ENCODE measurements at regions of chr4 and their contacts with region 1.

Region 1: DNA sequence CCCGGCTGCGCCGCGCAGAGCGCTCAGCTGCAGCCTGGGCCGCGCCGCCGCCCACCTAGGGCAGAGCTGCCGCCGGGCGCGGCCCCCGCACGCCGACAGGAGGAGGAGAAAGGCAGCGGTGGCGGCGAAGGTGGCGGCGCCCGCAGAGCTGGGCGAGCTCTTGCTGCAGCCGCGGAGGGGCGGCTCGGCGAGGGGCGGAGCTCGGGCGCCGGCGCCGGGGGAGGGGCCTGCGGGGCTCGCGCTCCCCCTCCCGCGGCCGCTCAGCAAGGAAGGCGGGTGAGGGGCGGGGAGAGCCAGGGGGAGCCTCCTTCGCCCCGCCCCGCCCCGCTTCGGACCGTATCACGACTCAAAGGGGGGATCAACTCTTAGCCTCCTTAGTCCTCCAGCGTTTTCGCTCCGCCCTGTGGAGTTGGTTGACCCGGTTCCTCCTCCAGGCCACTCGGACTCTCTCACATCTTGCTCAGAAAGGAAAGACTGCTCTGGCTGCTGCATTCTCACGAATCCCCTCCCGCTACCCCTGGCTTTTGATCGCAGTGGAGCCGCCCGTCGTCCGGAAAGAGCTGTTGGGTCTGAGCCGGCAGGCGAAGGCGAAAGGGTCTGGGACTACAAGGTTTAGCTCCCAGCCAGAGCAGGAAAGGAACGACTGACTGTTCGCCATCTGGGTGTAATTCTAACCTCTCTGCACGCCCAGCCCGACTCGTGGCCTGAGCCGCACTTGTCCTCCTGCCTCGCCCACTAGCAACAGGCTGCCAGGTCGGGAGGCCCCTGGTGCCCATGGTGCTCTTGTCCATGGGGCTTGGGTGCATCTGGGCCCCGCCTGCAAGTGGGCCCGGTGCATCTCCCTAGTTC is at the start of gene ATP8A1:
- DNase-seq: peak; percentile 92 to 96
- H3K4me3 ChIP-seq: peak within 1 kb of the TSS; percentile 91 to 95
- H3K27ac ChIP-seq: peak within 1 kb of the TSS; percentile 81 to 87
- H3K4me1 ChIP-seq: peaks cover 0 to 29% (median 18%) of the 10 kb centered on the region in 4 donors
- H3K27me3 ChIP-seq: no peaks in the 10 kb centered on the region
- CTCF ChIP-seq: peak in 1 of 2 experiments; percentile 12

Region 2: GRCh38 chr4:42262701-42263490 is 394.3 kb before region 1 on chr4:
- intact Hi-C with region 1: no loop called
- DNase-seq: no peak
- H3K4me3 ChIP-seq: no peak overlapping the region
- H3K27ac ChIP-seq: no peak overlapping the region
- H3K4me1 ChIP-seq: no peaks in the 10 kb centered on the region
- H3K27me3 ChIP-seq: no peaks in the 10 kb centered on the region
- CTCF ChIP-seq: no peak

Region 3: GRCh38 chr4:42412251-42412650 is 244.9 kb before region 1 on chr4:
- intact Hi-C with region 1: loop called (anchors 5 kb)
- DNase-seq: no peak
- H3K4me3 ChIP-seq: no peak overlapping the region
- H3K27ac ChIP-seq: peak overlapping the region; percentile 5 to 17
- H3K4me1 ChIP-seq: peaks cover 0 to 13% (median 4%) of the 10 kb centered on the region in 4 donors
- H3K27me3 ChIP-seq: no peaks in the 10 kb centered on the region
- CTCF ChIP-seq: no peak

Region 4: DNA sequence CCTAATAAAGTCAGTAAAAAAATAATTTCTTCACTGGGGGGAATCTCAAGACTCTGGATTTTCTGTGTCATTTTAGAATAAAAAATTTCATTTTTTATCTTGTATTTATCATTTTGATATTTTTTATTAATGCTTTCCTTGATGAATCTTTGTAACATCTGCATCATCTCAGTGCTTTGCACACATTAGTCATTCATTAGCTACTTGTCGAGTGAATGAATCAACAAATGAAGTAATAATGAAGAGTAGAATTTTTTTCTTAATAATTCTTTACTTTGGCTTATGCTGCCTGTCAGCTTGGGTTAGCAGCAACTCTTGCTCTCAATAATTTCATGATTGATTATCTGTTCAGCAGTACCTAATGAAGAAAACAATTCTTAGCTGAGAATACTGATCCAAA is 766.1 kb after region 1 on chr4:
- intact Hi-C with region 1: no loop called
- DNase-seq: no peak
- H3K4me3 ChIP-seq: no peak overlapping the region
- H3K27ac ChIP-seq: no peak overlapping the region
- H3K4me1 ChIP-seq: no peaks in the 10 kb centered on the region
- H3K27me3 ChIP-seq: no peaks in the 10 kb centered on the region
- CTCF ChIP-seq: no peak

Measured in tibial artery (tissue), 4 donors.